PC-9 (cell line): ENCODE measurements at regions of chr7 and their contacts with region 1.

Region 1: GRCh38 chr7:38215735-38216670 is 38.0 kb downstream of the STARD3NL start:
- DNase-seq: peak in 1 of 2 experiments; percentile 44
- H3K4me3 ChIP-seq: no peak overlapping the region
- H3K27ac ChIP-seq: no peak overlapping the region
- H3K4me1 ChIP-seq: no peaks in the 10 kb centered on the region
- H3K27me3 ChIP-seq: no peaks in the 10 kb centered on the region
- CTCF ChIP-seq: peak; percentile 94

Region 2: DNA sequence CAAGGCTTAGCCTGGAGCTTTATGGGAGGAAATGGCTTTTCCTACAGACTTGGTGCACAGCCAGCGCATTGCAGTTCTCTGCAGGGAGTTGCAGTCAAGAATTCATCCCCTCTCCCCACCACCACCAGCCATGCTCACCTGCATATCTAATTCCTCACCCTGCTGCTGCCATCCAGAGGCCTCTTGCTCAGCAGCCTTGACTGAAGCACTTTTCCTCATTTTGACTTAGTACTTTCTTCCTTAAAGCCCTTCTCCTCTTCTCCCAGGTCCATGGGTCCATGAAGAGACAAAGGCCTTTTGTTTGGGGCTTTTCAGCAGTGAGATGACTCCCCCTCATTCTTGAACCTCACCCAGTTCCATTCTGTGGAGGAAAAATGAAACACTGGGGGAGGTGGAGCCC is 572.1 kb before region 1 on chr7:
- CTCF ChIA-PET with region 1: no interaction called
- POLR2A ChIA-PET with region 1: no interaction called
- intact Hi-C with region 1: no loop called
- DNase-seq: no peak
- H3K4me3 ChIP-seq: no peak overlapping the region
- H3K27ac ChIP-seq: no peak overlapping the region
- H3K4me1 ChIP-seq: no peaks in the 10 kb centered on the region
- H3K27me3 ChIP-seq: peaks cover 6% of the 10 kb centered on the region; the same call in 1 of the 2 replicates
- CTCF ChIP-seq: no peak

Region 3: DNA sequence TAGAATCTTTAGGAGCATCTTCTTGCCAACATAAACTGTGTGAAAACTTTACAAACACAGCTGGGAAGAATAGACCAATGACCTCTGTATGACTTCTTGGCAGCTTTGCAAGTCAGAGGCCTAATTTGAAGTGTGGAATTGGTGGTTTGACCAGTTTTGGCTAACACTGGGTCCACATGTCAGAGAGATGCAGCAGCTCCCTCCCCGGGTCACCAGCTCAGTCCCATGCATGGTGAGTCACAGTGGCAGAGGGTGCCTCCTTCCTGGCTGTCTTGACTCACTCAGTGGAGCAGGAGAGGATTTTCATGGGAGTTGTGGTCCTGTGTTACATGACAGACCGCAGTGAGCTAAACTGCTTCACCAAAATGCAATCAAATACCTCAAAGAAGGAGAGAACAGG is 46.2 kb before region 1 on chr7:
- CTCF ChIA-PET with region 1: no interaction called
- POLR2A ChIA-PET with region 1: no interaction called
- intact Hi-C with region 1: loop called (anchors 10 kb)
- DNase-seq: peak; percentile 75 to 77
- H3K4me3 ChIP-seq: no peak overlapping the region
- H3K27ac ChIP-seq: no peak overlapping the region
- H3K4me1 ChIP-seq: peaks cover 10% of the 10 kb centered on the region
- H3K27me3 ChIP-seq: peaks cover 3% of the 10 kb centered on the region; the same call in 1 of the 2 replicates
- CTCF ChIP-seq: no peak

Region 4: GRCh38 chr7:38296059-38296857 is 80.3 kb after region 1 on chr7:
- CTCF ChIA-PET with region 1: no interaction called
- POLR2A ChIA-PET with region 1: no interaction called
- intact Hi-C with region 1: no loop called
- DNase-seq: no peak
- H3K4me3 ChIP-seq: no peak overlapping the region
- H3K27ac ChIP-seq: no peak overlapping the region
- H3K4me1 ChIP-seq: no peaks in the 10 kb centered on the region
- H3K27me3 ChIP-seq: peaks cover 84% of the 10 kb centered on the region
- CTCF ChIP-seq: no peak